Ovary (tissue), 10 donors: ENCODE measurements at regions of chr14 and their contacts with region 1.

Region 1: DNA sequence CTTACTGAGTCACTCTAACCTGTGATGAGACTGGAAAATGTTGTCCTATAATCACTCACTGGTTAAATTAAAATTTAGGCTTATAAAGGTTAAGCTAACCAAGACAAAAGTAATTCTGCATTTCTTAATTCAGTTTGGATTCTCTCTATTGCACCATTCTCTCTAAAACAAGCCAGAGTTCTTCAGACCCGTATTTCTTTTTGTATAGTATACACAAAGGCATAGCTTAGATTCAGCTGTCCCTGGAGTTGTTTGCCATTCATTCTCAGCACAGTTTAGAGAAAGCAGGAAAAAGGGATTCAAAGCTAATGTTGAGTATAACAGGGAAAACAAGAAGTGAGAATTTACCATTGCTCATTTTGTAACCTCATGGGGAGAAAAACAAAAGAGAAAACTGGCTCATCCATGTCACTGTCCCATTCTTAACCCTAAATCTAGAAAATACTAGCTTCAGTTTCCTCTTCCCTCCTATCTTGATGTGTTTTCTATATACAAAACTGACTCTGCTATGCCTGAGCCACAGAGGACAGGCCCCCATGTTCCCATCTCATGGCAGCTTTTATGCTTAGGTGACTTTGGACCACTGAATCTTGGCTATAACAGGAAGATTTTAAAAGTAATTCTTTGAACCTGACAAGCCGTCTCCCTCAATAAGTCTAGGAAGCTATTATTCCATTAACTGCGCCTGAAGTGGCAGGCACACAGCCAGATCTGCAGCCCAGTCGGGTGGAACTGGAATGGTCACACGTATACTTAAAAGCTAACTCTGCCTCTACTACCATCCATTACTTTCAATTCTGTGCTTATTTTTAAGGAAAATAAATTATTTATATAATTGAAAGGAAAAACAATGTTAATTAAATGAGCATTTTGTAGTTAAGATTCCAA is 7.0 kb downstream of the AREL1 start:
- DNase-seq: no peak
- H3K4me3 ChIP-seq: no peak overlapping the region
- H3K27ac ChIP-seq: peak overlapping the region in 1 of 2 donors; percentile 74
- H3K4me1 ChIP-seq: peaks cover 12% of the 10 kb centered on the region
- H3K27me3 ChIP-seq: no peaks in the 10 kb centered on the region
- CTCF ChIP-seq: no peak
- EP300 ChIP-seq: no peak
- POLR2A ChIP-seq: no peak

Region 2: DNA sequence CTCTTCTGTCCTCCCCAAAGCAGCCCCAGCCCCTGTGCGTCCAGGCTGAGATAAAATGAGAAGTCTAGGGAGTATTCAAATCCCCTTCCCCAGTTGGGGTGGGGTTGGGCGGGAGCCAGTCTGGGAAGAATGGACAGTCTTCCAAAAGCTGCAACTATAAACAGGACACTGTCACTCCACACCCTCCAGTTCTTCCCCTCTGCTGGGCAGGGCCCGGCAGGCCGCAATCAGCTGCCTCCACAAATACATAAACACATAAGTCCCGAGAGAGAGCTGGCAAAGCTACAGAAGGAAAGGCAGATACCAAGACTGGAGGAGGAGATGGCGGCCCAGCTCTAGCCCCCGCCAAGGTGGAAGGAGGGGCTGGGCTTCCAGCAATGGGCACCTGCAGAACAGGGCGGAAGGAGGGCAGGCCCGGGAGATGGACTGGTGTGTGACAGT is 106.5 kb before region 1 on chr14:
- intact Hi-C with region 1: no loop called
- DNase-seq: peak; percentile 63 to 74 (median 66)
- H3K4me3 ChIP-seq: no peak overlapping the region
- H3K27ac ChIP-seq: peak overlapping the region; percentile 72 to 78
- H3K4me1 ChIP-seq: peaks cover 54% of the 10 kb centered on the region
- H3K27me3 ChIP-seq: no peaks in the 10 kb centered on the region
- CTCF ChIP-seq: no peak
- EP300 ChIP-seq: no peak
- POLR2A ChIP-seq: no peak

Region 3: GRCh38 chr14:74655599-74656389 is 50.1 kb before region 1 on chr14:
- intact Hi-C with region 1: loop called in 1 of 4 experiments (anchors 10 kb)
- DNase-seq: no peak
- H3K4me3 ChIP-seq: no peak overlapping the region
- H3K27ac ChIP-seq: peak overlapping the region in 1 of 2 donors; percentile 63
- H3K4me1 ChIP-seq: peaks cover 9% of the 10 kb centered on the region
- H3K27me3 ChIP-seq: no peaks in the 10 kb centered on the region
- CTCF ChIP-seq: no peak
- EP300 ChIP-seq: no peak
- POLR2A ChIP-seq: no peak

Region 4: DNA sequence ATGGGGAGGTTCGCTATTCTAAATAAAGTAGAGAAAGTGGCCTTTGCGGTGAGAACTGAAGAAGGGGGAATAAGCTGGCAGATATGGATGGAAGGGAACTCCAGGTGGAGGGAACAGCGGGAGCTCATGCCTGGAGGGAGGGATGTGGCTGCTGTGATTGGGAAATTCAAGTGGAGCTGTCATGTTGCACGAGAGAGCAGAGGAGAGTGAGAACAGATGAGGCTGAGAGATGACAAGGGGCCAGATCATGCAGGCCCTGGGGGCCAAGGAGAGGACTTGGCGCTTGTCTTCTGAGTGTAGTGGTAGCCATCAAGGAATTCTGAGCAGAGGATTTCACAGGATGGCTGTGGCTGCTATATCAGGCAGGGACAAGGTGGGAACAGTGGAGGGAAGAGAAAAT is 1240.9 kb after region 1 on chr14:
- intact Hi-C with region 1: no loop called
- DNase-seq: no peak
- H3K4me3 ChIP-seq: no peak overlapping the region
- H3K27ac ChIP-seq: no peak overlapping the region
- H3K4me1 ChIP-seq: no peaks in the 10 kb centered on the region
- H3K27me3 ChIP-seq: no peaks in the 10 kb centered on the region
- CTCF ChIP-seq: no peak
- EP300 ChIP-seq: no peak
- POLR2A ChIP-seq: no peak